CD4-positive, alpha-beta memory T cell (primary cell): ENCODE measurements at regions of chr7 and their contacts with region 1.

Region 1: GRCh38 chr7:92682903-92683539 is 92.8 kb upstream of the FAM133B start:
- DNase-seq: peak; percentile 25 to 45 (median 39)
- H3K4me3 ChIP-seq: peak overlapping the region in 1 of 2 donors; percentile 4
- H3K4me3 Mint-ChIP-seq: peak overlapping the region in 7 of 8 donors; percentile 8 to 70 (median 62)
- H3K27ac ChIP-seq: peak overlapping the region; percentile 32
- H3K27ac Mint-ChIP-seq: peak overlapping the region; percentile 38 to 91 (median 81)
- H3K4me1 ChIP-seq: peaks cover 73% of the 10 kb centered on the region
- H3K4me1 Mint-ChIP-seq: peaks cover 65 to 87% (median 76%) of the 10 kb centered on the region in 4 donors
- H3K27me3 ChIP-seq: no peaks in the 10 kb centered on the region
- H3K27me3 Mint-ChIP-seq: no peaks in the 10 kb centered on the region

Region 2: GRCh38 chr7:92641921-92642511 is 41.0 kb before region 1 on chr7:
- CTCF ChIA-PET with region 1: no interaction called
- POLR2A ChIA-PET with region 1: no interaction called
- intact Hi-C with region 1: loop called (anchors 5 kb)
- DNase-seq: peak in 1 of 5 donors; percentile 72
- H3K4me3 ChIP-seq: no peak overlapping the region
- H3K4me3 Mint-ChIP-seq: peak overlapping the region; percentile 23 to 75 (median 60)
- H3K27ac ChIP-seq: peak overlapping the region; percentile 48
- H3K27ac Mint-ChIP-seq: peak overlapping the region; percentile 86 to 95 (median 92)
- H3K4me1 ChIP-seq: peaks cover 44% of the 10 kb centered on the region
- H3K4me1 Mint-ChIP-seq: peaks cover 46 to 77% (median 58%) of the 10 kb centered on the region in 4 donors
- H3K27me3 ChIP-seq: no peaks in the 10 kb centered on the region
- H3K27me3 Mint-ChIP-seq: no peaks in the 10 kb centered on the region

Region 3: GRCh38 chr7:92698237-92698841 is 15.3 kb after region 1 on chr7:
- CTCF ChIA-PET with region 1: no interaction called
- POLR2A ChIA-PET with region 1: no interaction called
- intact Hi-C with region 1: no loop called
- DNase-seq: no peak
- H3K4me3 ChIP-seq: no peak overlapping the region
- H3K4me3 Mint-ChIP-seq: no peak overlapping the region
- H3K27ac ChIP-seq: no peak overlapping the region
- H3K27ac Mint-ChIP-seq: no peak overlapping the region
- H3K4me1 ChIP-seq: no peaks in the 10 kb centered on the region
- H3K4me1 Mint-ChIP-seq: peaks cover 6 to 10% (median 8%) of the 10 kb centered on the region in 4 donors
- H3K27me3 ChIP-seq: no peaks in the 10 kb centered on the region
- H3K27me3 Mint-ChIP-seq: no peaks in the 10 kb centered on the region